Tibial artery (tissue), 4 donors: ENCODE measurements at regions of chr11 and their contacts with region 1.

Region 1: DNA sequence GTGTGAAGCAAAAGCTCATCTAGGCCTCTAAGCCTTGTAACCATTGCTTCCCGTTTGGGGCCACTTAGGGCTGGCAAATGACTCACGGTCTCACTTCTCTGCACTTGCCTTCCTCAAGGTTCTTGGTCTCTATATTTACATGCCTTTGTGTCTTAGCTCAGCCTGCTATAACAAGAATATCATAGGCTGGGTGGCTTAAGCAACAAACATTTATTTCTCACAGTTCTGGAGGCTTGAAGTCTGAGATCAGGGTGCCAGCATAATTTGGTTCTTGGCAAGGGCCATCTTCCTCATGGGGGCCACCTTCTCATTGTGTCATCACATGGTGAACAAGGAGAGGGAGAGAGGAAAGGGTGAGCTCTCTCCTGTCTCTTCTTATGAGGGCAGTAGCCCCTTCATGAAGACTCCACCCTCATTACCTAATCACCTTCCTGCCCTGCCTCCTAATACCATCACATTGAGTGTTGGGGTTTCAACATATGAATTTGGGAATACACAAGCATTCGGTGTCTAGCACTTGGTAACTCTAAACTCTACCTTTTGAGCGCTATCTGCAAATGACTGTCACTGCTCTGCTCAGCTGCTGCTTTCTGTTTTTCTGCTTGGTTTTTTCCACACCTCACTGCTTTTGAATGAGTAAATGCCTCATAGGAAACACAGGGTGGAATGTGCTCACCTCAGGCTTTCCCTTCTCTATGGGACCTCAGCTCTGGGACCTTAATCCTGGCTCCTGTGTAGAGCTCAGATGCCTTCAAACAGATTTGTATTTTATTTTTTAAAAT is 16.2 kb upstream of the ME3 start:
- DNase-seq: no peak
- H3K4me3 ChIP-seq: no peak overlapping the region
- H3K27ac ChIP-seq: peak overlapping the region; percentile 59 to 74
- H3K4me1 ChIP-seq: peaks cover 0 to 27% (median 13%) of the 10 kb centered on the region in 4 donors
- H3K27me3 ChIP-seq: no peaks in the 10 kb centered on the region
- CTCF ChIP-seq: no peak

Region 2: GRCh38 chr11:86632499-86633269 is 55.9 kb before region 1 on chr11:
- intact Hi-C with region 1: loop called (anchors 10 kb)
- DNase-seq: peak; percentile 41 to 75
- H3K4me3 ChIP-seq: no peak overlapping the region
- H3K27ac ChIP-seq: peak overlapping the region; percentile 40 to 81
- H3K4me1 ChIP-seq: peaks cover 0 to 65% (median 52%) of the 10 kb centered on the region in 4 donors
- H3K27me3 ChIP-seq: no peaks in the 10 kb centered on the region
- CTCF ChIP-seq: peak; percentile 38 to 52